ENCODE measurements at regions of chr9 and their contacts with region 1.

Region 1: GRCh38 chr9:129289131-129289731 is 111.2 kb upstream of the IER5L start:
- DNase-seq: no peak
- ATAC-seq: no peak
- H3K4me3 Mint-ChIP-seq: no peak overlapping the region
- H3K27ac Mint-ChIP-seq: no peak overlapping the region
- H3K4me1 Mint-ChIP-seq: no peaks in the 10 kb centered on the region
- H3K27me3 Mint-ChIP-seq: no peaks in the 10 kb centered on the region

Region 2: DNA sequence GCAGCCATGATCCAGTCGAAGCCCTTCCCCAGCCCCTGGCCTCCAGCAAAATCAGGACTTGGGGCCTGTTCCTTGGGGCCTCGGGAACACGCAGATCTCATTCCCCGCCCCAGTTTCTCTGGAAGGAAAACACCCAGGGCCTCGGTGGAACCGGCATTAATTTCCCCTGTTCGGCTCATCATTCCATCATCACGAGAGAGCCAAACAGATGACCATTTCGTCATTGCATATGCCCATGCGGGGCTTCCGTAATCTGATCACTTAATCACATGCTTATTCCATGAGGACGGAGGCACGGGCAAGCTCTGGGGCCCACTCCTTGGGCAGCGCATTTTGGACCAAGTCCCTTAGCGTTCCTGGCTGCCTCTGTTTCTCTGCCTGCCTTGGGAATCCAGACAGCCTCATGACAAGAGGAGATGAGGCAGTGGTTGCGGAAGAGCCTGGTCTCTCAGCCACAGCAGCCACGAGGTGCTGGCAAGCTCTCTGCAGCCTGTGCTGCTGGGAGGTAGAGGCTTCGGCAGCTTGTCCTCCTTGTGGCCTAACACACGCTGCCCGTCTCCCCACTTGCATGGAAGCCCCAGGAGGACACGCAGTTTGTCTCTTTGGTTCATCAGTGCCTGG is 46.2 kb before region 1 on chr9:
- CTCF ChIA-PET with region 1: no interaction called
- POLR2A ChIA-PET with region 1: interaction called, 11 read pairs
- intact Hi-C with region 1: no loop called
- DNase-seq: no peak
- ATAC-seq: no peak
- H3K4me3 Mint-ChIP-seq: no peak overlapping the region
- H3K27ac Mint-ChIP-seq: no peak overlapping the region
- H3K4me1 Mint-ChIP-seq: peaks cover 11% of the 10 kb centered on the region
- H3K27me3 Mint-ChIP-seq: no peaks in the 10 kb centered on the region

Measured in activated CD4-positive, alpha-beta T cell treated with anti-CD3 and anti-CD28 coated beads for 36 hours (primary cell).